Activated naive CD4-positive, alpha-beta T cell treated with anti-CD3 and anti-CD28 coated beads, Interleukin-2, amount 10 ng/mL, durations not matched to agents 7 days and 5 days (primary cell): ENCODE measurements at regions of chr2 and their contacts with region 1.

Region 1: GRCh38 chr2:200703127-200703925 is 108.4 kb upstream of the BZW1 start:
- DNase-seq: no peak
- H3K4me3 Mint-ChIP-seq: no peak overlapping the region
- H3K27ac Mint-ChIP-seq: no peak overlapping the region
- H3K4me1 Mint-ChIP-seq: peaks cover 18% of the 10 kb centered on the region
- H3K27me3 Mint-ChIP-seq: peaks cover 8% of the 10 kb centered on the region

Region 2: DNA sequence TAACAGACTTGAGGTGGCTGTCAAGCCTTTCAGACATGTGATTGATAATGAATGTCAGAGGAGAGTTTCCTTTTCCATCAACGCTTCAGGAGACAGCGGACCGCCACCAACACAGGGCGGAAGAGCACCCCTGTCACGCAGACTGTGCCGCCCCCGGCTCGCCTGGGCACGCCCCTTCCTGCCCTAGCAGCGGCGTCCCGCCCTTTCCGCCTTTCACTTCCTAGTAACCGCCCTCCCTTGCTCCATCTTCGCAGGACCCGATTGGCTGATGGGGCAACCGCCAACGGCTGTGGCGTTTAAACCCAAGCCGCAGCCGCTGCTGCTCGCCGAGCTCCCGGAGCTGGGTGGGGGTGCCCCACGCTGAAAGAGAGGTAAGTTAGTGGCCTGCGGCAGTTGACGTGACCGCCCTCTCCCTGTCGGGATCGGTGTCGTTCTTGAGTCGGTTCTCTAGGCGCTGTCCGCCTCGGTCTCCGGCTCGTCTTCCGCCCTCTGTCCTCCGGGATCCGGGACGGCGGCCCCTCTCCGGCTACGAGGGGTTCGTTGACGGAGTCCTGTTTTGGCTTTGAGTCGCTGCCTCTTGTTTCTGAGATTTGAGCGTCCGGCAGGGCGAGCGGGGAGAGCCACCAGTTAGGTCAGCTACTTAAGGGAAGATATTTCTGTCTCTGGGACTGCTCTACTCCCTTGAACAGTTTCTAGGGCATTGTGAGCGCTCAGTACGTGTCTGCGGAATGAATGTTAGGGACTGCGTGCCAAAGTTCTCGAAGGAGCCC is 177.3 kb before region 1 on chr2 and contains the start of gene SGO2:
- CTCF ChIA-PET with region 1: no interaction called
- DNase-seq: peak; percentile 98
- H3K4me3 Mint-ChIP-seq: peak within 1 kb of the TSS; percentile 90
- H3K27ac Mint-ChIP-seq: peak within 1 kb of the TSS; percentile 83
- H3K4me1 Mint-ChIP-seq: peaks cover 41% of the 10 kb centered on the region
- H3K27me3 Mint-ChIP-seq: peaks cover 4% of the 10 kb centered on the region

Region 3: GRCh38 chr2:200578778-200579177 is 124.5 kb before region 1 on chr2:
- CTCF ChIA-PET with region 1: interaction called, 10 read pairs
- DNase-seq: no peak
- H3K4me3 Mint-ChIP-seq: no peak overlapping the region
- H3K27ac Mint-ChIP-seq: no peak overlapping the region
- H3K4me1 Mint-ChIP-seq: peaks cover 7% of the 10 kb centered on the region
- H3K27me3 Mint-ChIP-seq: no peaks in the 10 kb centered on the region

Region 4: GRCh38 chr2:200662738-200663137 is 40.6 kb before region 1 on chr2:
- CTCF ChIA-PET with region 1: no interaction called
- DNase-seq: no peak
- H3K4me3 Mint-ChIP-seq: no peak overlapping the region
- H3K27ac Mint-ChIP-seq: no peak overlapping the region
- H3K4me1 Mint-ChIP-seq: peaks cover 2% of the 10 kb centered on the region
- H3K27me3 Mint-ChIP-seq: peaks cover 19% of the 10 kb centered on the region

Region 5: GRCh38 chr2:200735061-200735460 is 31.7 kb after region 1 on chr2:
- CTCF ChIA-PET with region 1: interaction called, 20 read pairs
- DNase-seq: no peak
- H3K4me3 Mint-ChIP-seq: no peak overlapping the region
- H3K27ac Mint-ChIP-seq: no peak overlapping the region
- H3K4me1 Mint-ChIP-seq: peaks cover 11% of the 10 kb centered on the region
- H3K27me3 Mint-ChIP-seq: peaks cover 45% of the 10 kb centered on the region